K562 (cell line): ENCODE measurements at regions of chr10 and their contacts with region 1.

Region 1: GRCh38 chr10:45308707-45309106 is 6.7 kb downstream of the OR13A1 start:
- DNase-seq: peak in 2 of 4 experiments; percentile 41 to 70
- ATAC-seq: peak; percentile 93
- H3K4me3 ChIP-seq: no peak overlapping the region
- H3K27ac ChIP-seq: no peak overlapping the region
- H3K4me1 ChIP-seq: peaks cover 3 to 10% of the 10 kb centered on the region in 2 experiments; a peak in 4 of 5 replicates
- H3K27me3 ChIP-seq: no peaks in the 10 kb centered on the region
- CTCF ChIP-seq: peak; percentile 50 to 80 (median 68)
- EP300 ChIP-seq: no peak
- POLR2A ChIP-seq: no peak
- RAD21 ChIP-seq: peak; percentile 70 to 76

Region 2: GRCh38 chr10:44913350-44914081 is 395.2 kb before region 1 on chr10:
- CTCF ChIA-PET with region 1: no interaction called
- POLR2A ChIA-PET with region 1: no interaction called
- in situ Hi-C with region 1: no loop called
- intact Hi-C with region 1: no loop called
- DNase-seq: peak; percentile 75 to 91 (median 80)
- ATAC-seq: peak; percentile 85
- H3K4me3 ChIP-seq: no peak overlapping the region
- H3K27ac ChIP-seq: peak overlapping the region; percentile 51
- H3K4me1 ChIP-seq: peaks cover 32 to 35% of the 10 kb centered on the region in 2 experiments
- H3K27me3 ChIP-seq: peaks cover 2 to 8% of the 10 kb centered on the region in 2 experiments; a peak in 3 of 5 replicates
- CTCF ChIP-seq: no peak
- EP300 ChIP-seq: peak; percentile 84
- POLR2A ChIP-seq: no peak
- RAD21 ChIP-seq: peak; percentile 7 to 11; a peak in 1 of 4 replicates

Region 3: GRCh38 chr10:45437587-45438465 is 129.1 kb after region 1 on chr10:
- CTCF ChIA-PET with region 1: no interaction called
- POLR2A ChIA-PET with region 1: no interaction called
- in situ Hi-C with region 1: no loop called
- intact Hi-C with region 1: loop called (anchors 5 kb)
- DNase-seq: no peak
- ATAC-seq: no peak
- H3K4me3 ChIP-seq: no peak overlapping the region
- H3K27ac ChIP-seq: peak overlapping the region; percentile 54; the same call in 2 of the 3 replicates
- H3K4me1 ChIP-seq: peaks cover 13 to 29% of the 10 kb centered on the region in 2 experiments
- H3K27me3 ChIP-seq: no peaks in the 10 kb centered on the region
- CTCF ChIP-seq: no peak
- EP300 ChIP-seq: no peak
- POLR2A ChIP-seq: no peak
- RAD21 ChIP-seq: no peak